Vagina (tissue), 2 donors: ENCODE measurements at regions of chr13 and their contacts with region 1.

Region 1: DNA sequence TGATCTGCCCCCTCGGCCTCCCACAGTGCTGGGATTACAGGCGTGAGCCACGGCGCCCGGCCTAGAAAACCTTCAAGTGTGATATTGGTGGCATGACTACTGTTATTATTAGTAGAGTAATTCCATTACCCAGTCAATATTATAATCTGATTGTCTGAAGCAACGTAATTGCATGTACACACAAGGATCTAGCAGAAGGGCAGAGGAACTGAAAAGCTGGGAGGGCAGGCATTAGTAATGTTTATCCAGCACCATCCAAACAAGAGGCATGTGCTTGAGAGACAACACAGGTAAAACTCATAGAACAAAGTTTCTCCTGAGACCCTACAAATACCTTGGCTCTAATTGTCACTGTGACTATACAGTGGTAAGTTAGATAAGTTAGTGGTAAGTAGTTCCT is 56.2 kb upstream of the ITM2B start:
- DNase-seq: no peak
- H3K4me3 ChIP-seq: no peak overlapping the region
- H3K27ac ChIP-seq: no peak overlapping the region
- H3K4me1 ChIP-seq: no peaks in the 10 kb centered on the region
- H3K27me3 ChIP-seq: no peaks in the 10 kb centered on the region
- CTCF ChIP-seq: no peak
- POLR2A ChIP-seq: no peak

Region 2: DNA sequence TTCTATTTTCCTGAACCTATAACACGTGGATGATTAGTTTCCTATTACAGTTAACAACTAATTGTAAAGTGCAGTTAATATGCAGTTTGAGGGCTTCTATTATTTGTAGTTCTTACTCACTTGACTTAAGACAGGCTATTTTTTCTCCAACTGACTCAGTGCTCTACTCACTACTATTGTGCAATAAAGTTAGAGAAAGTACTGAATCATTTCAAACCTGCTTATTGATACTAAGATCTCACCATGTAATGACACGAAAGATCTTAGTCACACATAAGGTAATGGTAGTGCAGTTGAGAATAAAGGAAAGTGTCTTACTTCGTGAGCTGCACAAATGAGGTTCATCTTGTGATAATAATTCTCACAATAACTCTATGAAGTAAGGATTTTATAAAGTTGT is 33.4 kb after region 1 on chr13:
- intact Hi-C with region 1: no loop called
- DNase-seq: no peak
- H3K4me3 ChIP-seq: no peak overlapping the region
- H3K27ac ChIP-seq: no peak overlapping the region
- H3K4me1 ChIP-seq: no peaks in the 10 kb centered on the region
- H3K27me3 ChIP-seq: no peaks in the 10 kb centered on the region
- CTCF ChIP-seq: no peak
- POLR2A ChIP-seq: no peak

Region 3: DNA sequence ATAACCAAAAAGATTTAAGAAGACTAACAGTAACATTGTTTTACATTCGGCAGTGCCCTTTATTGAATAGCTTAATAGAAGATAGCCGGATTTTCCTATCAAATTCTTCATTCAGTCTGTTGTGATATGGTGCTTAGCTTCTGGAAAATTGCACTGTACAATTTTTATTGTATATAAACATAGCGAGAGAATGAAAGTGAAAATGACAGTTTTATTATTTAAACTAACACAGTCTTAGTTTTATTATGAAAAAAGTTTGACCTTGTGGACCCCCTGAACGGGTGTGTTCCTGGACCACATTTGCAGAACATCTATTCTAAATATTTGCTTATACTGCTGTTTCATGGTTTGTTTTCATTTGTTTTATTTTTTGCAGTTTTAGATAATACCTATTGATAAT is 64.9 kb after region 1 on chr13:
- intact Hi-C with region 1: loop called (anchors 2 kb)
- DNase-seq: no peak
- H3K4me3 ChIP-seq: no peak overlapping the region
- H3K27ac ChIP-seq: no peak overlapping the region
- H3K4me1 ChIP-seq: peaks cover 92% of the 10 kb centered on the region
- H3K27me3 ChIP-seq: no peaks in the 10 kb centered on the region
- CTCF ChIP-seq: no peak
- POLR2A ChIP-seq: no peak

Region 4: DNA sequence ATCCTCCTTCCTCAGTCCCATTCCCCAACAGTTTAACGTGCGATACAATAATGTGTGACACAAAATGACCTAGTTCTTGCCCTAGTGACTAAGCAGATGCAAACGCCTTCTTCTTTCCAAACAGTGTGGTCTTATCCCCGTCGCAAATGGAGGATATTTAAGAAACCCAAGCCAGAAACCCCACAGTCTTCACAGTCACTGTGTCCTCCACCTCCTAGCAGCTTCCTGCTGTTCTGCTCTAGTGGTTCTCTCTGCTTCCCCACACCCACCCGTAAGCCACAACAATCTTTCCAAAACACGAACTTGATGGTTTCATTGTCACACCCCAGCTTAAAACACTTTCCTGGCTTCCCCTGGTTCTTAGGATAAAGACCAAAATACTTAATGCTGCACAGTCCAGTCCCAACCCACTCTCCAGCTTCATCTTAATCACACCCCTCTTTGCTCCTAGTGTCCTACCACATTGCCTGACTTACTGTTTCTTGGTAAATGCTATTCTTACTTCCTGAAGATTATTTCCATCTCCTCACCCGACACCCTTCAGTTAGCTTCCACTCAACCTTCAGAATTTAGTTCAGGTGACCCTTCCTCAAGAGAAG is 88.5 kb after region 1 on chr13:
- intact Hi-C with region 1: no loop called
- DNase-seq: no peak
- H3K4me3 ChIP-seq: no peak overlapping the region
- H3K27ac ChIP-seq: no peak overlapping the region
- H3K4me1 ChIP-seq: peaks cover 21% of the 10 kb centered on the region
- H3K27me3 ChIP-seq: no peaks in the 10 kb centered on the region
- CTCF ChIP-seq: no peak
- POLR2A ChIP-seq: no peak